PC-9 (cell line): ENCODE measurements at regions of chr9 and their contacts with region 1.

Region 1: GRCh38 chr9:76987594-76988200 is 31.8 kb upstream of the FOXB2 start:
- DNase-seq: peak in 1 of 2 experiments; percentile 21
- H3K4me3 ChIP-seq: no peak overlapping the region
- H3K27ac ChIP-seq: no peak overlapping the region
- H3K4me1 ChIP-seq: no peaks in the 10 kb centered on the region
- H3K27me3 ChIP-seq: peaks cover 35% of the 10 kb centered on the region
- CTCF ChIP-seq: peak; percentile 63

Region 2: DNA sequence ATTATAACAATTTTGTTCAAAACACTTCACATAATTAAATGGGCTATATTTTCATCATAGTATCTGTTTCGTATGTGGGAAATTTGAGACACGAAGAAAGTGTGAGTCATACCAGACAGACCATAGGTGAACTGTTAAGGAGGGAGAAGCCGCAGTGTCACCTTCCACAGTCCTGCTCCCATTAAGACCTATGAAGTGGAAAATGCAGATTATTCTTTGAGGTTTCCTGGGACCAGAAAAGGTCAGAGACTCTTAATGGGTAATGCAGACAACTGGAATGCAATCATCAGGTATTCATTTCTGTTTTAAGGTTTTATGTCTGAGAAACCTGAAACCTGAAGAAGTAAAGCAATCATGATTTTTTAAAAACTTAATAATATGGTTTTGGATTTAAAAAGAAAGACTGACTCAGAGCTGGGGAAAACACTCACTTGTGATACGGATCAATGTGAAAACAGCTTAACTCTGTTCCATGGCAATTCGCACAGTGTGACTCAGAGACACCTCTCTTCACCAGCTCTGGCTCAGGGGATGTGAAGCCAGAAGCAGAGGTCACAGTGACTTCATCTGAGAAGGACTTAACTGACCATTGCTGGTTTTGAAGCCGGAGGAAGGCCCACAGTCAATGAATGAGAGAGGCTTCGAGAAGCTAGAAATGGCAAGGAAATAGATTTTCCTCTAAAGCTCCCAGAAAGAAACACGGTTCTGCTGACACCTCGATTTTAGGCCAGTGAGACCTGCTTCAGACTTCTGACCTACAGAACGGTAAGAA is 546.0 kb before region 1 on chr9:
- CTCF ChIA-PET with region 1: no interaction called
- POLR2A ChIA-PET with region 1: no interaction called
- intact Hi-C with region 1: loop called (anchors 5 kb)
- DNase-seq: peak; percentile 53 to 84
- H3K4me3 ChIP-seq: no peak overlapping the region
- H3K27ac ChIP-seq: peak overlapping the region; percentile 86
- H3K4me1 ChIP-seq: peaks cover 22% of the 10 kb centered on the region
- H3K27me3 ChIP-seq: no peaks in the 10 kb centered on the region
- CTCF ChIP-seq: no peak

Region 3: GRCh38 chr9:76810377-76810957 is 177.2 kb before region 1 on chr9:
- CTCF ChIA-PET with region 1: interaction called, 10 read pairs
- POLR2A ChIA-PET with region 1: no interaction called
- intact Hi-C with region 1: loop called (anchors 1 kb)
- DNase-seq: peak in 1 of 2 experiments; percentile 31
- H3K4me3 ChIP-seq: no peak overlapping the region
- H3K27ac ChIP-seq: no peak overlapping the region
- H3K4me1 ChIP-seq: no peaks in the 10 kb centered on the region
- H3K27me3 ChIP-seq: peaks cover 52% of the 10 kb centered on the region
- CTCF ChIP-seq: peak; percentile 89

Region 4: DNA sequence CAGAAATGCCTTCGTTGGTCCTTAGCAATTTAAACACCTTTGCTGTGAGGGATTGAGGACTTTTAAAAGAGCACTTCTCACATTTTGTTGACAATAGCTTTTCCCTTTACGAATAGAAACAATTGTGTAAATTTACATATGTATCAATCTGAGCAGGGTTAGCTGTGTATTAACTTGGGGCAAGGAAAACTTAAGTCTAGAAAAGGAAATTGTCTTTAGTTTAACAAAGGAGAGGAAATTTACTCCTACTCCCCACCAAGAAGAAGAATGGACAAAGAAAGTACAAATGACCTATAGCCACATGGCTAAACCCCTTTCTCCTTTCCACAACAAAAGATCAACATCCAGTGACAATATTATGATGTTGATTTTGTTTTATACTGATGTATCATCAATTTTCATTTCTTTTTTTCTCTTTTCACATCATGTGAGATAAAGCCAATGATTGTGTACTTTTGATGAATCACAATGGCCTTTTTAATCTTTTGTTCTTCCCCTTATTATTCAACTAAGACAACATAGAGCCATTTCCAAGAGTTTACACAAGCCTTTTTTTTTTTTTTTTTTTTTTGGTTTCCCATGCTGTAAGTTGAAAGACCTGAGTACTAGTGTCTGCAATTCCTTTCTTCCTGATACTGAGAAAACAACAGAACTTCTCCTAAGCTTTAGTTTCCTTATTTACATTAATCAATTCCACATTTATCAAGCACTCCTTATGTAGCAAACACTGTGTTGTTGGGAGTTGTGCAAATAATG is 50.8 kb after region 1 on chr9:
- CTCF ChIA-PET with region 1: no interaction called
- POLR2A ChIA-PET with region 1: no interaction called
- intact Hi-C with region 1: loop called (anchors 1 kb)
- DNase-seq: no peak
- H3K4me3 ChIP-seq: no peak overlapping the region
- H3K27ac ChIP-seq: no peak overlapping the region
- H3K4me1 ChIP-seq: no peaks in the 10 kb centered on the region
- H3K27me3 ChIP-seq: peaks cover 20% of the 10 kb centered on the region
- CTCF ChIP-seq: no peak